ENCODE measurements at regions of chr1 and their contacts with region 1.

Region 1: DNA sequence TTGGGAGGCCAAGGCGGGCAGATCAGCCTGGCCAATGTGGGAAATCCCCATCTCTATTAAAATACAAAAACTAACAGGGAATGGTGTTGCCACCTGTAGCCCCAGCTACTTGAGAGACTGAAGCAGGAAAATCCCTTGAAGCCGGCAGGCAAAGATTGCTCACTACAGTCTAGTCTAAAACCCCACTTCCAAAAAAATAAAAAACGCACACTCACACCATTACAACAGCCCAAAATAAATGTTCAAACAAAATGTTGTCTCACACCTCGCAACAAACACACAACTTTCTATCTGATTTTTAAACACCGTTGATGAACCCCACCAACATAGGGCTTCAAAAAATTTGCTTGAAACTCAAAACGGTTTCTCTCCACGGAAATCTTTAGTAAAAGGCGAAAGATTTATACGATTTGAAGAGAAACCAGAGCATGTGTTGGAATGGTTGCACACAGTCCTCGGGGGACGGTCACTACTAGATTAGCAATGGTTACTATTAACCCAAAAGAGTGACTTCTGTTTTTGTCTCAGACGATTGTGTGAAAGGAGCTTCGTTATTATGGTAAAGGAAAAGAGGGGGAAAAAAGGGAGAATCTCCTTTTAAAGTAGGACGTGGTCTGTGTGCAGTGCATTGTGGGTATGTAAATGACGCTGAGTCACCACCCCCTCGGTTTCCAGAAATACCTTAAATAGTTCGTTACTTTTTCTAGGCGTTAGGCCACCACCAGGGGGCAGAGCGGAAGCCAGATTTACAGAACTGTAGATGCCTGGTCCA is at the start of gene RNU5D-1:
- DNase-seq: peak; percentile 90
- H3K4me3 ChIP-seq: peak within 1 kb of the TSS; percentile 18; the same call in 1 of the 2 replicates
- H3K4me3 Mint-ChIP-seq: peak within 1 kb of the TSS; percentile 59
- H3K27ac Mint-ChIP-seq: peak within 1 kb of the TSS; percentile 99
- H3K4me1 ChIP-seq: no peaks in the 10 kb centered on the region
- H3K4me1 Mint-ChIP-seq: peaks cover 12% of the 10 kb centered on the region
- H3K27me3 ChIP-seq: no peaks in the 10 kb centered on the region
- H3K27me3 Mint-ChIP-seq: no peaks in the 10 kb centered on the region
- CTCF ChIP-seq: peak; percentile 69 to 78
- total RNA-seq, gene RNU5D-1: 16.3 TPM in 1 of 2 replicates, not detected in the other

Region 2: GRCh38 chr1:44283524-44284173 is 447.3 kb before region 1 on chr1:
- CTCF ChIA-PET with region 1: no interaction called
- POLR2A ChIA-PET with region 1: no interaction called
- intact Hi-C with region 1: no loop called
- DNase-seq: peak in 1 of 2 experiments; percentile 12
- H3K4me3 ChIP-seq: no peak overlapping the region
- H3K4me3 Mint-ChIP-seq: no peak overlapping the region
- H3K27ac Mint-ChIP-seq: peak overlapping the region; percentile 65
- H3K4me1 ChIP-seq: peaks cover 3% of the 10 kb centered on the region
- H3K4me1 Mint-ChIP-seq: peaks cover 8% of the 10 kb centered on the region
- H3K27me3 ChIP-seq: no peaks in the 10 kb centered on the region
- H3K27me3 Mint-ChIP-seq: no peaks in the 10 kb centered on the region
- CTCF ChIP-seq: no peak

Region 3: GRCh38 chr1:44694863-44695478 is 36.0 kb before region 1 on chr1:
- CTCF ChIA-PET with region 1: no interaction called
- POLR2A ChIA-PET with region 1: no interaction called
- intact Hi-C with region 1: no loop called
- DNase-seq: no peak
- H3K4me3 ChIP-seq: no peak overlapping the region
- H3K4me3 Mint-ChIP-seq: no peak overlapping the region
- H3K27ac Mint-ChIP-seq: no peak overlapping the region
- H3K4me1 ChIP-seq: no peaks in the 10 kb centered on the region
- H3K4me1 Mint-ChIP-seq: no peaks in the 10 kb centered on the region
- H3K27me3 ChIP-seq: no peaks in the 10 kb centered on the region
- H3K27me3 Mint-ChIP-seq: peaks cover 4% of the 10 kb centered on the region
- CTCF ChIP-seq: no peak

Region 4: GRCh38 chr1:44792783-44793714 is 62.1 kb after region 1 on chr1:
- CTCF ChIA-PET with region 1: no interaction called
- POLR2A ChIA-PET with region 1: no interaction called
- intact Hi-C with region 1: loop called (anchors 5 kb)
- DNase-seq: no peak
- H3K4me3 ChIP-seq: no peak overlapping the region
- H3K4me3 Mint-ChIP-seq: peak overlapping the region; percentile 4
- H3K27ac Mint-ChIP-seq: peak overlapping the region; percentile 74
- H3K4me1 ChIP-seq: 0 out of 2 replicates have a peak, but pooled peaks cover 5% of the 10 kb centered on the region
- H3K4me1 Mint-ChIP-seq: peaks cover 14% of the 10 kb centered on the region
- H3K27me3 ChIP-seq: no peaks in the 10 kb centered on the region
- H3K27me3 Mint-ChIP-seq: no peaks in the 10 kb centered on the region
- CTCF ChIP-seq: no peak

Measured in Caco-2 (cell line).